ENCODE measurements at regions of chr2 and their contacts with region 1.

Region 1: GRCh38 chr2:176126929-176127773 is 2.4 kb upstream of the HOXD8 start:
- DNase-seq: no peak
- H3K4me3 ChIP-seq: no peak overlapping the region
- H3K27ac ChIP-seq: no peak overlapping the region
- H3K4me1 ChIP-seq: peaks cover 27 to 61% (median 42%) of the 10 kb centered on the region in 4 donors
- H3K27me3 ChIP-seq: peaks cover 10 to 100% (median 83%) of the 10 kb centered on the region in 4 donors
- CTCF ChIP-seq: peak; percentile 84 to 90 (median 89)
- EP300 ChIP-seq: no peak
- POLR2A ChIP-seq: no peak

Region 2: GRCh38 chr2:175903384-175903936 is 223.7 kb before region 1 on chr2:
- intact Hi-C with region 1: no loop called
- DNase-seq: no peak
- H3K4me3 ChIP-seq: no peak overlapping the region
- H3K27ac ChIP-seq: no peak overlapping the region
- H3K4me1 ChIP-seq: peaks cover 0 to 2% (median 0%) of the 10 kb centered on the region in 4 donors
- H3K27me3 ChIP-seq: no peaks in the 10 kb centered on the region
- CTCF ChIP-seq: no peak
- EP300 ChIP-seq: no peak
- POLR2A ChIP-seq: no peak

Region 3: DNA sequence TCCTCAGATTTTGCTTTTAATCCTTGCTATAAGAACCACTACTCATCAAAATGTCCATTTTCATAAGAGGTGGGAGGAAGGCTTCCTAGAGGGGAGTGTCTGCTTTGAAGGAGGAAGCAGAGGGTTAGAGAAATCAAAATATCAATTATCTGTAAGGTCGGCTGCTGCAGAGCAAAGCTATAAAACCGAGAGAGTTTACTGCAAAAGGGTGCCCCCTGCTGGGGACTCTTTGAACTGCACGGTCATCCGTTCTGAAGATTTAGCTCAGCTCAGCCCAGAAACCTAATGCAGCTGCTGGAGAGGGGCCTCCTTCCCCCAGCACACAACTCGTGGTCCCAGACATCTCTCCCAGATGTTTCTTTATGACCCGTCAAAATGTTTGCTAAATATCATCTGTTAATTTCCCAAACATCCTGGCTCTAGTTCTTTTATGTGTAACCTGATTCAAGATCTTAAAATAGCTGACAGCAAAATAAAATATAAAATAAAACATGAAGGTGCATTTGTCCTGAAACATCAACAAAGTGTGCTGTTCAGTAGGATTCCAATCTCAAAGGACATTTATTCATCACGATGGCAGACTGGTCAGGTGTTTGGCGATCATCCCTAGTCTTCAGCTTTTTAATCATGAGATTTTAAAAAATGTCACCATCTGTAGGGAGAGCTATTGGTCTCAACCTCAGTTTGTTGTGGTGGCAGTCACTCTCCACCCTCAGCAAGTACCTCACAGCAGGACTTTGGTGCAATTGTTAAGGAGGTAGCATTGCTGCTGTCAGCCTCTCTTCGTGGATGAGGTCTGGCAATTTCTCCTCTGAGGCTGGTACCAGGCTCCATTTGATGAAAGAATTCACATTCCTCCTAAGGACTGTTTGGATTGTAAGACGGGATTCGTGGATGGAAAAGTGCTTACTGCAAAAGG is 328.0 kb after region 1 on chr2:
- intact Hi-C with region 1: loop called (anchors 5 kb)
- DNase-seq: peak; percentile 96
- H3K4me3 ChIP-seq: no peak overlapping the region
- H3K27ac ChIP-seq: peak overlapping the region; percentile 35 to 59 (median 46)
- H3K4me1 ChIP-seq: peaks cover 8 to 14% (median 10%) of the 10 kb centered on the region in 4 donors
- H3K27me3 ChIP-seq: peaks cover 0 to 37% (median 0%) of the 10 kb centered on the region in 4 donors
- CTCF ChIP-seq: peak; percentile 76 to 98 (median 96)
- EP300 ChIP-seq: no peak
- POLR2A ChIP-seq: no peak

Region 4: GRCh38 chr2:176554101-176555048 is 427.2 kb after region 1 on chr2:
- intact Hi-C with region 1: loop called (anchors 5 kb)
- DNase-seq: no peak
- H3K4me3 ChIP-seq: peak overlapping the region; percentile 49 to 64 (median 56)
- H3K27ac ChIP-seq: peak overlapping the region; percentile 58 to 72 (median 66)
- H3K4me1 ChIP-seq: peaks cover 0 to 24% (median 23%) of the 10 kb centered on the region in 4 donors
- H3K27me3 ChIP-seq: peaks cover 0 to 45% (median 0%) of the 10 kb centered on the region in 4 donors
- CTCF ChIP-seq: peak; percentile 71 to 75 (median 72)
- EP300 ChIP-seq: no peak
- POLR2A ChIP-seq: no peak

Region 5: GRCh38 chr2:176638167-176639015 is 511.2 kb after region 1 on chr2:
- intact Hi-C with region 1: loop called (anchors 5 kb)
- DNase-seq: no peak
- H3K4me3 ChIP-seq: peak overlapping the region; percentile 63 to 76 (median 66)
- H3K27ac ChIP-seq: peak overlapping the region in 3 of 4 donors; percentile 66 to 76 (median 70)
- H3K4me1 ChIP-seq: peaks cover 8 to 15% (median 10%) of the 10 kb centered on the region in 4 donors
- H3K27me3 ChIP-seq: peaks cover 0 to 94% (median 11%) of the 10 kb centered on the region in 4 donors
- CTCF ChIP-seq: peak; percentile 69 to 77 (median 73)
- EP300 ChIP-seq: no peak
- POLR2A ChIP-seq: no peak

Region 6: DNA sequence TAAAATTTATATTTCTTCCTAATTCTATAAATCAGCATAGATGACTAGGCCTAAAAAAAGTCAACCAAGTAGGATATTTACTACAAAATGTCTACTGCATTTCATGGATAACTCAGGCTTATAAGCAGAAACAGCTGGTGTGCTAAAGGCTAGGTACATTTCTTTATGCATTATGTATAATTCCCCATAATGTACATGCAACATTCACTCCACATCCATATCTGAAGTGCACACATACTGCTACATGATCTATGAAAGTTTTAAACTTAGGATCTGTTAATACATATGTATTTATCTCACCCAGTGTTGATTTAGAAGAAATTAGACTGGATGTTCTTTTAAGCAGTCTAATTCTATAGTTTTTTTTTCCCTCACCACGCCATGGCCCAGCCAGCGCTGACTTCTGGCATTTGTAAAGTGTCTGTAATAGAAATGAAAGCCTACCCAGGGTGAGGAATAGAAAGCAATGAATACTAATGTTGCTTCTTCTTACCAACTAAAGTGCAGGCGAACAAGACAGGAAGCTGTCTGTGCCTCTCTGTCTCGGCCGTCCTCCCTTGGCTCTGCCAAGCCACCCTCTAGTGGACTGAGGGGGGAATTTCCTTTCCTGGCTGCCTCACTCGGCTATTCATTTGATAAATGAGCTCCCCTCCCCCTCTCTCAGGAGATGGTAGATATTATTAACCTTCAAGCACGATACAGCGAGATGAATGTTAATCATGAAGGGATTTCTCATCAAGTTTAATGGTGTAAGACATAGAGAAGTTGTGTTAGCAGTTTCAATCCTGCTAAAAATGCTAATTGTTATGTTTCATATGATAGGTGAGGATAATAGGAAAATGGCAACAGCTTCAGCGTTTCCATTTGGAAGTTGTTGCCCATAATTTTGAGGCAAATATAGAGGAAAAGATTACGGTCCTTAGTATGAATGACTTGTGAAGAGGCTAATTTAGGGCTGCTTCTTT is 526.6 kb after region 1 on chr2:
- intact Hi-C with region 1: loop called (anchors 1 kb)
- DNase-seq: no peak
- H3K4me3 ChIP-seq: no peak overlapping the region
- H3K27ac ChIP-seq: no peak overlapping the region
- H3K4me1 ChIP-seq: peaks cover 0 to 9% (median 6%) of the 10 kb centered on the region in 4 donors
- H3K27me3 ChIP-seq: peaks cover 0 to 25% (median 2%) of the 10 kb centered on the region in 4 donors
- CTCF ChIP-seq: peak; percentile 40 to 65 (median 55)
- EP300 ChIP-seq: no peak
- POLR2A ChIP-seq: no peak

Region 7: GRCh38 chr2:176814306-176815052 is 687.3 kb after region 1 on chr2:
- intact Hi-C with region 1: loop called (anchors 5 kb)
- DNase-seq: no peak
- H3K4me3 ChIP-seq: no peak overlapping the region
- H3K27ac ChIP-seq: no peak overlapping the region
- H3K4me1 ChIP-seq: peaks cover 0 to 5% (median 0%) of the 10 kb centered on the region in 4 donors
- H3K27me3 ChIP-seq: no peaks in the 10 kb centered on the region
- CTCF ChIP-seq: peak; percentile 54 to 75 (median 70)
- EP300 ChIP-seq: no peak
- POLR2A ChIP-seq: no peak

Region 8: DNA sequence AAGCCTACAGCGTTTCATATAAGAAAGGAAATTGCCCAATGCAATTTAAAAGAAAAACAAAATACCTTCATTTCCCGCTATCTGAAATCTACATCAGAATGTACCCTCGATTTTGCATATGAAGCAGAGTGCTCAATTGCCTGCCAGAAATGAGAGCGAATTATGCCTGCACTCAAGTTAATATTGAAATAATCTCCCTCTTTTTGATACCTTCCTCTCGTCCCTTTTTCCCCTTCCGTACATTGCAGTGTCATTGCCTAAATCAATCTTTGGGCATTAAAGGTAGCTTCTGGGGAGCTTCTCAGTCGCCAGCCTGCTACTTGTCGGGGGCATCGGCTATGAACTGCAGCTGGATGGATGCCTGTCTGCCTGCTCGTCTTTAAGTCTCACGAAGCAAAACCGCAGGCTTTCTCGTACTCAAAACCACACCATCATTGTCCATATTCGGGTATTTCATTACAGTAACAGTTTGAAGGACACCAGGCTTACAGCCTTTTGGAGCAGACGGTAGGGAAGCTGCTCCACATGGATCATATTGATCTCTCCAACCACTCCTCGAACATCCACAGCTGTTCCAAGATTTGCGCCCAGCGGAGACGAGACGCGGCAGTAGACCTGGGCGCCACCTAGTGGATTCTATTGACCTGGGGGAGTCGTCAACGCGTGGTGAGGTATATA is 1021.5 kb after region 1 on chr2:
- intact Hi-C with region 1: loop called (anchors 2 kb)
- DNase-seq: no peak
- H3K4me3 ChIP-seq: peak overlapping the region; percentile 43 to 54 (median 44)
- H3K27ac ChIP-seq: no peak overlapping the region
- H3K4me1 ChIP-seq: peaks cover 7 to 14% (median 10%) of the 10 kb centered on the region in 4 donors
- H3K27me3 ChIP-seq: peaks cover 0 to 68% (median 16%) of the 10 kb centered on the region in 4 donors
- CTCF ChIP-seq: peak; percentile 68 to 80 (median 73)
- EP300 ChIP-seq: no peak
- POLR2A ChIP-seq: no peak

Measured in esophagus muscularis mucosa (tissue), 4 donors.